Breast epithelium (tissue), 4 donors: ENCODE measurements at regions of chrX and their contacts with region 1.

Region 1: GRCh38 chrX:119359618-119360382 is 39.3 kb upstream of the SLC25A43 start:
- DNase-seq: no peak
- H3K4me3 ChIP-seq: no peak overlapping the region
- H3K27ac ChIP-seq: no peak overlapping the region
- H3K4me1 ChIP-seq: no peaks in the 10 kb centered on the region
- H3K27me3 ChIP-seq: peaks cover 0 to 23% of the 10 kb centered on the region in 2 donors
- CTCF ChIP-seq: no peak
- POLR2A ChIP-seq: no peak

Region 2: GRCh38 chrX:119235872-119236622 is 123.8 kb before region 1 on chrX and contains the start of gene PGRMC1:
- intact Hi-C with region 1: loop called (anchors 5 kb)
- DNase-seq: peak; percentile 74 to 79
- H3K4me3 ChIP-seq: peak within 1 kb of the TSS; percentile 68 to 74 (median 71)
- H3K27ac ChIP-seq: peak within 1 kb of the TSS; percentile 86 to 91
- H3K4me1 ChIP-seq: no peaks in the 10 kb centered on the region
- H3K27me3 ChIP-seq: peaks cover 0 to 14% of the 10 kb centered on the region in 2 donors
- CTCF ChIP-seq: no peak
- POLR2A ChIP-seq: no peak
- total RNA-seq, gene PGRMC1: 118 to 217 (median 177) TPM